Vagina (tissue), 2 donors: ENCODE measurements at regions of chr2 and their contacts with region 1.

Region 1: DNA sequence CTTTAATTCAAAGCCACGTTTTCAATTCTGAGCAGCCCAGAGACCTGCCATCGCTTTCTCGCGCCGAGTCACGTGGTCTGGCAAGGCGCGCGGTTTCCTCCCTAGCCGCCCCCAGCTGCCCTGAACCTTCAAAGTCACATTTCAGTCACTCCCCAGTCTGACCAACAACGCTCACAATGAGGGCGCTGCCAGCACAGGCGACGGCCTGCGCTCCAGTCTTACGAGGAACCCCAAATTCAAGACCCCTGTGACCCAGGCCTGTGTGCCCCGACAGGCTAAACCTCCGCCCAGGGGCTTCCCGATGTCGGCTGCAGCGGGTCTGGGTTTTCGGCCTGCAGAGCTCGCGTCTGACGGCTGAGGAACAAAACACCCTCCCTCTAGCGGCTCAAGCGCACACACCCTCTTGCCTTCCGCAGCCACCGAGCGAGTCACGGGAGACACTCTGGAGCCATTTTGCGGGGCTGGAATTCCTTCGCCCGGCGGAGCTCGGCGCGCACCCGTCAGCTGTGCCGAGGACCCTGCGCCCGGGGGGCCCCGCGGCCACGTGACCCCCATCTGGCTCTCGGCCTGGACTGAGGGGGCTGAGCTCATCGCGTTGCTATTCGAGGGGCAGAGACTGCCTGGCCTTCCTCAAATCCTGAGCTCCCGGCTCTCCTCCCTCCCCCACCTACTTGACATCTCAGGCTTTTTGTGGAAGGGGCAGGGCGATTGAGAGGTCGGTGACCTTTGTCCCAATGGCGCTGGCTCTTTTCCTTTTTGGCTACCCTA is 69.9 kb upstream of the ITGB6 start:
- DNase-seq: peak in 1 of 2 donors; percentile 97
- H3K4me3 ChIP-seq: peak overlapping the region; percentile 46 to 49
- H3K27ac ChIP-seq: peak overlapping the region; percentile 88
- H3K4me1 ChIP-seq: peaks cover 39% of the 10 kb centered on the region
- H3K27me3 ChIP-seq: no peaks in the 10 kb centered on the region
- CTCF ChIP-seq: peak in 2 of 3 experiments; percentile 55 to 75
- POLR2A ChIP-seq: peak in 1 of 2 donors; percentile 18

Region 2: GRCh38 chr2:160317181-160318099 is 47.5 kb after region 1 on chr2:
- intact Hi-C with region 1: no loop called
- DNase-seq: no peak
- H3K4me3 ChIP-seq: no peak overlapping the region
- H3K27ac ChIP-seq: peak overlapping the region; percentile 56
- H3K4me1 ChIP-seq: peaks cover 59% of the 10 kb centered on the region
- H3K27me3 ChIP-seq: no peaks in the 10 kb centered on the region
- CTCF ChIP-seq: no peak
- POLR2A ChIP-seq: no peak

Region 3: DNA sequence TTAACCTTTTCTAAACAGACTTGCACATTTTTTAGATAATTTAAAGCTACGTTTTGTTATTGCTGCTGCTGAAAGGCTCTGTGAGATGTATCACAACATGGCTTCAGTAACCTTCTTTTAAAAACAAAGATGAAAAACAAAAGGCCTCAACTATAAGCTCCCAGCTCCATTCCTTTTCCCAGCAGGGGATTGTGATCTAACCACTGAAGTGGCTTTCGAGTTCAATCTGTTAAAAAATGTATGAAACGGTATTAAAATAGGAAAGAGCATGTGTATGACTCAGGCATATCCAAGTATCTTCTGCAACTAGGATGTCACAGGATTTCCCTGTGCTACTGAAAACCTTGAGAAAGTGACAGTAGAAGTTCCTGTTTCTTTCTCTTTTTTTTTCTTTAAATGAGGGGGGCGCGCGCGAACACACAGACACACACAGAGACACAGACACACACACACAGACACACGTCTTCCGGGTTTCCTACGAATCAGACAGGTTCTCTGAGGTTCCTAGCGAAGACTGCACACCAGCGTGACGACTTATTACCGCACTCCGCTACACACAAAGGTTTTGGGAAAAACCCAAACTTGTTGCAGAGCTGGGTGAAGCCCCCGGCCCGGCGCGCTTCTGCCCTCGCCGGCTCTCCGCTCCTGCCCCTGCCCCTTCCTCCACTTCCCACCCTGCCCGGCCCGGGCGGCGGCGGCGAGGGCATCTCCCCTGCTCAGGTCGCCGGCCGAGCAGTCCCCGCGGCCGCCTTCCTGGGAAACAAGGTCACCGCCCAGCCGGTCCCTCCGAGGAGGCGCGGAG is 136.8 kb after region 1 on chr2:
- intact Hi-C with region 1: loop called (anchors 10 kb)
- DNase-seq: no peak
- H3K4me3 ChIP-seq: peak overlapping the region; percentile 90 to 100
- H3K27ac ChIP-seq: peak overlapping the region; percentile 92
- H3K4me1 ChIP-seq: peaks cover 74% of the 10 kb centered on the region
- H3K27me3 ChIP-seq: no peaks in the 10 kb centered on the region
- CTCF ChIP-seq: no peak
- POLR2A ChIP-seq: peak in 1 of 2 donors; percentile 54